WTC11 (cell line): ENCODE measurements at regions of chr21 and their contacts with region 1.

Region 1: GRCh38 chr21:45011911-45012660 is 62.3 kb upstream of the ADARB1 start:
- DNase-seq: peak; percentile 62
- ATAC-seq: peak; percentile 85
- H3K4me3 Mint-ChIP-seq: no peak overlapping the region
- H3K27ac Mint-ChIP-seq: no peak overlapping the region
- H3K4me1 Mint-ChIP-seq: peaks cover 19% of the 10 kb centered on the region
- H3K27me3 Mint-ChIP-seq: peaks cover 24% of the 10 kb centered on the region
- CTCF ChIP-seq: no peak

Region 2: DNA sequence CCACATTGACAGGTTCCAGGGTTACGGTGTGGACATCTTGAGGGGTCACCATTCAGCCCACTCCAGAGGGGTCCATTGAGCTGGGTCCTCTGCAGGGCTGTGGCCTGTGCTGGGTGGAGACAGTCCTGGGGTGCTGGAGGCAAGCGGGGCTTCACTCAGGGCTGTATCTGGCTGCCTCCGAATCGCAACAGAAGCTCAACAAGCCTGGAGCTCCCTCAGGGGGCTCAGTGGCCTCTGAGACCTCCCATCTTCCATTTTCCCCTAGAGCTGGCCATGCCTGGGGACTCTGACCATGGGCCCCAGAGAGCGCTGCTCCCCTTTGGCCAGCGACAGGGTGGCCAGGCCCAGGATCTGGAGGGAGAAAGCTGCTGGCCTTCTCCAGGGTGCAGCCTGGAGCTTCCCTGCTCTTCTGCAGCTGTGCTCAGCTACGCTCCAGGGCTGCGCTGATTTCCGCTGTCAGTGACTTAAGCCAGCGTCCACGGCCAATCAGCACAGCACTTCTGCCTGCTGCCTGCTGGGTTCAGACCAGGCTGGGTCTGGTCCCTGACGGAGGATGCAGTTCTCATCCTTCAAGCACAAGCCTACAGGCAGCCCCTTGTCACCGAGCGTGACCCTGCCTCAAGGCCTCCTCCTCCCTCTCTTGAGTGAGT is 17.3 kb after region 1 on chr21:
- CTCF ChIA-PET with region 1: interaction called, 18 read pairs
- POLR2A ChIA-PET with region 1: no interaction called
- DNase-seq: no peak
- ATAC-seq: peak; percentile 71
- H3K4me3 Mint-ChIP-seq: peak overlapping the region; percentile 22; the same call in 1 of the 2 replicates
- H3K27ac Mint-ChIP-seq: no peak overlapping the region
- H3K4me1 Mint-ChIP-seq: peaks cover 33% of the 10 kb centered on the region
- H3K27me3 Mint-ChIP-seq: peaks cover 11% of the 10 kb centered on the region; the same call in 1 of the 2 replicates
- CTCF ChIP-seq: no peak

Region 3: GRCh38 chr21:45074048-45074817 is 62.1 kb after region 1 on chr21 and contains the start of gene ADARB1:
- CTCF ChIA-PET with region 1: interaction called, 14 read pairs
- POLR2A ChIA-PET with region 1: interaction called, 6 read pairs
- DNase-seq: peak; percentile 68
- ATAC-seq: peak; percentile 49
- H3K4me3 Mint-ChIP-seq: peak within 1 kb of the TSS; percentile 82
- H3K27ac Mint-ChIP-seq: peak within 1 kb of the TSS; percentile 80; the same call in 1 of the 2 replicates
- H3K4me1 Mint-ChIP-seq: peaks cover 14% of the 10 kb centered on the region
- H3K27me3 Mint-ChIP-seq: peaks cover 30% of the 10 kb centered on the region
- CTCF ChIP-seq: no peak
- total RNA-seq, gene ADARB1: 12.8 to 15.1 TPM (median 14.6 TPM) in 3 replicates

Region 4: GRCh38 chr21:45130324-45130774 is 118.3 kb after region 1 on chr21:
- CTCF ChIA-PET with region 1: interaction called, 10 read pairs
- POLR2A ChIA-PET with region 1: no interaction called
- DNase-seq: no peak
- ATAC-seq: no peak
- H3K4me3 Mint-ChIP-seq: no peak overlapping the region
- H3K27ac Mint-ChIP-seq: no peak overlapping the region
- H3K4me1 Mint-ChIP-seq: no peaks in the 10 kb centered on the region
- H3K27me3 Mint-ChIP-seq: no peaks in the 10 kb centered on the region
- CTCF ChIP-seq: no peak